ENCODE measurements at regions of chr1 and their contacts with region 1.

Region 1: GRCh38 chr1:39408641-39409054 is 82.8 kb upstream of the BMP8A start:
- DNase-seq: peak; percentile 50 to 91 (median 83)
- ATAC-seq: peak; percentile 87
- H3K4me3 ChIP-seq: peak overlapping the region; percentile 50 to 55
- H3K4me3 Mint-ChIP-seq: peak overlapping the region; percentile 88
- H3K27ac ChIP-seq: peak overlapping the region in 1 of 2 experiments; percentile 38
- H3K27ac Mint-ChIP-seq: no peak overlapping the region
- H3K4me1 ChIP-seq: peaks cover 35% of the 10 kb centered on the region
- H3K4me1 Mint-ChIP-seq: peaks cover 45% of the 10 kb centered on the region
- H3K27me3 ChIP-seq: no peaks in the 10 kb centered on the region
- H3K27me3 Mint-ChIP-seq: no peaks in the 10 kb centered on the region
- CTCF ChIP-seq: no peak

Region 2: GRCh38 chr1:39183503-39184353 is 224.9 kb before region 1 on chr1:
- CTCF ChIA-PET with region 1: interaction called, 3 read pairs
- POLR2A ChIA-PET with region 1: no interaction called
- intact Hi-C with region 1: loop called in 1 of 2 experiments (anchors 2 kb)
- DNase-seq: peak; percentile 60 to 93 (median 83)
- ATAC-seq: peak; percentile 87
- H3K4me3 ChIP-seq: no peak overlapping the region
- H3K4me3 Mint-ChIP-seq: no peak overlapping the region
- H3K27ac ChIP-seq: peak overlapping the region; percentile 46 to 69
- H3K27ac Mint-ChIP-seq: peak overlapping the region; percentile 97
- H3K4me1 ChIP-seq: peaks cover 20% of the 10 kb centered on the region
- H3K4me1 Mint-ChIP-seq: peaks cover 34% of the 10 kb centered on the region
- H3K27me3 ChIP-seq: no peaks in the 10 kb centered on the region
- H3K27me3 Mint-ChIP-seq: no peaks in the 10 kb centered on the region
- CTCF ChIP-seq: peak; percentile 71

Region 3: GRCh38 chr1:39224295-39224829 is 184.3 kb before region 1 on chr1:
- CTCF ChIA-PET with region 1: no interaction called
- POLR2A ChIA-PET with region 1: no interaction called
- intact Hi-C with region 1: no loop called
- DNase-seq: no peak
- ATAC-seq: no peak
- H3K4me3 ChIP-seq: no peak overlapping the region
- H3K4me3 Mint-ChIP-seq: no peak overlapping the region
- H3K27ac ChIP-seq: no peak overlapping the region
- H3K27ac Mint-ChIP-seq: peak overlapping the region; percentile 38
- H3K4me1 ChIP-seq: peaks cover 49% of the 10 kb centered on the region
- H3K4me1 Mint-ChIP-seq: peaks cover 72% of the 10 kb centered on the region
- H3K27me3 ChIP-seq: no peaks in the 10 kb centered on the region
- H3K27me3 Mint-ChIP-seq: no peaks in the 10 kb centered on the region
- CTCF ChIP-seq: no peak

Region 4: GRCh38 chr1:39378377-39378776 is 30.3 kb before region 1 on chr1:
- CTCF ChIA-PET with region 1: interaction called, 11 read pairs
- POLR2A ChIA-PET with region 1: no interaction called
- intact Hi-C with region 1: loop called (anchors 5 kb)
- DNase-seq: peak in 2 of 9 experiments; percentile 19 to 36
- ATAC-seq: no peak
- H3K4me3 ChIP-seq: no peak overlapping the region
- H3K4me3 Mint-ChIP-seq: no peak overlapping the region
- H3K27ac ChIP-seq: no peak overlapping the region
- H3K27ac Mint-ChIP-seq: peak overlapping the region; percentile 33
- H3K4me1 ChIP-seq: no peaks in the 10 kb centered on the region
- H3K4me1 Mint-ChIP-seq: no peaks in the 10 kb centered on the region
- H3K27me3 ChIP-seq: no peaks in the 10 kb centered on the region
- H3K27me3 Mint-ChIP-seq: no peaks in the 10 kb centered on the region
- CTCF ChIP-seq: no peak

Region 5: GRCh38 chr1:39398278-39399021 is 10.2 kb before region 1 on chr1:
- CTCF ChIA-PET with region 1: interaction called, 25 read pairs
- POLR2A ChIA-PET with region 1: interaction called, 5 read pairs
- intact Hi-C with region 1: loop called (anchors 2 kb)
- DNase-seq: peak in 3 of 9 experiments; percentile 14 to 39 (median 22)
- ATAC-seq: peak; percentile 38
- H3K4me3 ChIP-seq: no peak overlapping the region
- H3K4me3 Mint-ChIP-seq: peak overlapping the region; percentile 9
- H3K27ac ChIP-seq: no peak overlapping the region
- H3K27ac Mint-ChIP-seq: peak overlapping the region; percentile 56
- H3K4me1 ChIP-seq: peaks cover 28% of the 10 kb centered on the region
- H3K4me1 Mint-ChIP-seq: peaks cover 55% of the 10 kb centered on the region
- H3K27me3 ChIP-seq: no peaks in the 10 kb centered on the region
- H3K27me3 Mint-ChIP-seq: no peaks in the 10 kb centered on the region
- CTCF ChIP-seq: no peak

Region 6: GRCh38 chr1:39450956-39451606 is 42.4 kb after region 1 on chr1:
- CTCF ChIA-PET with region 1: no interaction called
- POLR2A ChIA-PET with region 1: no interaction called
- intact Hi-C with region 1: no loop called
- DNase-seq: no peak
- ATAC-seq: no peak
- H3K4me3 ChIP-seq: no peak overlapping the region
- H3K4me3 Mint-ChIP-seq: no peak overlapping the region
- H3K27ac ChIP-seq: no peak overlapping the region
- H3K27ac Mint-ChIP-seq: no peak overlapping the region
- H3K4me1 ChIP-seq: no peaks in the 10 kb centered on the region
- H3K4me1 Mint-ChIP-seq: no peaks in the 10 kb centered on the region
- H3K27me3 ChIP-seq: no peaks in the 10 kb centered on the region
- H3K27me3 Mint-ChIP-seq: no peaks in the 10 kb centered on the region
- CTCF ChIP-seq: no peak

Region 7: GRCh38 chr1:40979233-40980067 is 1570.8 kb after region 1 on chr1 and contains the start of gene CTPS1:
- CTCF ChIA-PET with region 1: no interaction called
- POLR2A ChIA-PET with region 1: no interaction called
- intact Hi-C with region 1: loop called in 1 of 2 experiments (anchors 5 kb)
- DNase-seq: peak; percentile 92 to 98 (median 95)
- ATAC-seq: peak; percentile 81
- H3K4me3 ChIP-seq: peak within 1 kb of the TSS; percentile 83 to 91
- H3K4me3 Mint-ChIP-seq: peak within 1 kb of the TSS; percentile 95
- H3K27ac ChIP-seq: peak within 1 kb of the TSS; percentile 85 to 95
- H3K27ac Mint-ChIP-seq: peak within 1 kb of the TSS; percentile 97
- H3K4me1 ChIP-seq: peaks cover 16% of the 10 kb centered on the region
- H3K4me1 Mint-ChIP-seq: peaks cover 35% of the 10 kb centered on the region
- H3K27me3 ChIP-seq: no peaks in the 10 kb centered on the region
- H3K27me3 Mint-ChIP-seq: no peaks in the 10 kb centered on the region
- CTCF ChIP-seq: no peak
- total RNA-seq, gene CTPS1: 68.5 to 69.0 TPM

Measured in CD8-positive, alpha-beta T cell (primary cell).